ENCODE measurements at regions of chr2 and their contacts with region 1.

Region 1: GRCh38 chr2:120343433-120344105 is 2.4 kb upstream of the INHBB start:
- DNase-seq: peak; percentile 91
- ATAC-seq: peak; percentile 83

Region 2: GRCh38 chr2:120219766-120220165 is 123.8 kb before region 1 on chr2:
- intact Hi-C with region 1: no loop called
- DNase-seq: no peak
- ATAC-seq: no peak

Region 3: DNA sequence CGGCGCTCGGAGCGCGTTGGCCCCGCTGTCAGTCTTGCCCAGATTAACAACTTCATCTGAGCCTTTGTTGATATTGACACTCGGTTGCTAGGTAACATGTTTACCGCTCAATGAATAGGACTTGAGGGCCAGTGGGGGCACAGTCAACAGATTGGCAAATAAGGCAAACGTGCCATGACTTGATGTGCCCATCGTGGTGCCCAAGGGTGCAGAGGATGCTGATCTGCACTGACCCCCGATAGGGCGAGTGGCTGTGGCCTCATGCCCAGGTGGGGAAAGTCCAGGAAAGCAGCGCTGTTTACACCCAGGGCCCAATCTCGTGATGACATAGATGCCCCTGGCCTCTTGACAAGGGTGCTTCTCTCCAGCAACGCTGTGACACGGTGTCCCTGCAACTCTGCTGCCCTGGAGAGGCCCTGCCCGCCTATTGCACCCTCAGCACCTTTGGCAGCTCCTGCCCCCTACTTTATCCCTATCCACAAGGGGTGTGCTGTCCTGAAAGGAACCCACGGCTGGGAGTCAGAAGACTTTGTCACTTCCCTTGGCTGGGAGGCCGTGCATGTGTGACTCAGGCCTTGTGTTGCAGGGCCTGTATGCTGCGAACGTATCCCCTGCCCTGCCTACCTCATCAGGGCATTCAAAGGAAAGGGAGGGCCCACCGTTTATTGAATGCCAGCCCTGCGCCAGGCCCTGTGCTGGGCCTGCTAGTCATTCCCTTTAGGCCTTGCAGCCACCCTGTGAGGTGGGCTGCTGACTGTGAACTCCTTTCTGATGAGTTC is 160.4 kb after region 1 on chr2:
- intact Hi-C with region 1: loop called (anchors 1 kb)
- DNase-seq: peak; percentile 83
- ATAC-seq: peak; percentile 95

Region 4: DNA sequence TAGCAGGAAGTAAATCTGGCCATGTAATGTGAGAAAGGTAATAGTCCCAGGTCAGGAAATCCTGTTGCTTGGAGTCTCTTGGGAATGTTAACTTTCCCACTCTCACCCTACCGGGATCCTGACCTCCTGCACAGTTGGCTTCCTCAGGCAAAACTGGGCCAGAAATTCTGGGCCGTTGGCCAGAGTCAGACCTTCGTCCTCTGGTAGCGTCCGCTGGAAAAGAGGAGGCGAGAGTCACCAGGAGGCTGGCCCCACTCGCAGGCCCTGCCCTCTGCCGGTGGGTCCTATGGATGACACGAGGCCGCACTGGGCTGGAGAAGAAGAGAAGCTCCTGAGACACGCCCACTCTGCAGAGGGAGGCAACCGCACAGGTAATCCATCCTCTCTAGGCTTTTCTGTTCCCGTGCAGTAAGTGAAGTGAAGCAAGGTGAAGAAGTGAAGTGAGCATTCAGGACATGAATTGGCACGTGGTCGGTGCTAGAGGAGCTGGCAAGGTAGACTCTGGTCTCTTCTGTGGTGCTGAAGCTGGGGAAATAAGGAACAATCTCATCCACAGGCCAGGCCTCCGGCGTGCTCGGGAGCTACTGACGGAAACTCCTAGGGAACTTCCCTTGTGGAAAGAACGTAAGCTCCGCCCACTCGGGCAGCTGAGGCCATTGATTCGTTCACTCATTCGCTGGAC is 209.4 kb after region 1 on chr2:
- intact Hi-C with region 1: loop called (anchors 1 kb)
- DNase-seq: peak; percentile 91
- ATAC-seq: peak; percentile 89

Region 5: GRCh38 chr2:120566331-120567035 is 222.9 kb after region 1 on chr2:
- intact Hi-C with region 1: loop called (anchors 5 kb)
- DNase-seq: peak; percentile 89
- ATAC-seq: peak; percentile 93

Region 6: DNA sequence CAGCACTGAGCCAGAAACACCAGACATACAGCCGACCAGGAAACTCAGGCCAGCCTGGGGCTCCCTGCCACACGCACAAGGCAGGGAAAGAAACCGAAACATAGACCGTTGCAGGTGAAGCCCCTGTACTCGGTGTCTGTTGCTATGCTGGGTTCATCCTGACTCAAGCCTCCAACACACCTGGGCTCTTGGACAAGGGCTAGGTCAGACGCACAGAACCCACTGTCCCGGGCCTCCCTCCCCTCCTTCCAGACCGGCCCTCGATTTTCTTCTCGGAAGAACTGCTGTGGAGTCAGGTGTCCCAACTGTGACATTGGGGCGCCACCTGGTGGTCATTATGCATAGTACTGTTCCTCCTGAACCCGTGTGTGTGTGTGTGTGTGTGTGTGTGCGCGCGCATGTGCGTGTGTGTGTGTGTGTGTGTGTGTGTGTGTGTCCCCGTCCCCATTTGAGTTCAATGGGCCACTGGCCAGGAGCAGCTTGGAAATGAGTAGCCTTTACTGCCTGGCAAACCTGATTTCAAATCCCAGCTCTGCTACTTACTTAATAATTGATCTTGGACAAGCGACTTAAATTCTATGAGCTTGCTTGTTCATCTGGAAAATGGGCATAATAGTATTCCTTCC is 336.7 kb after region 1 on chr2:
- intact Hi-C with region 1: loop called (anchors 1 kb)
- DNase-seq: peak; percentile 86
- ATAC-seq: peak; percentile 81